ENCODE measurements at regions of chr17 and their contacts with region 1.

Region 1: DNA sequence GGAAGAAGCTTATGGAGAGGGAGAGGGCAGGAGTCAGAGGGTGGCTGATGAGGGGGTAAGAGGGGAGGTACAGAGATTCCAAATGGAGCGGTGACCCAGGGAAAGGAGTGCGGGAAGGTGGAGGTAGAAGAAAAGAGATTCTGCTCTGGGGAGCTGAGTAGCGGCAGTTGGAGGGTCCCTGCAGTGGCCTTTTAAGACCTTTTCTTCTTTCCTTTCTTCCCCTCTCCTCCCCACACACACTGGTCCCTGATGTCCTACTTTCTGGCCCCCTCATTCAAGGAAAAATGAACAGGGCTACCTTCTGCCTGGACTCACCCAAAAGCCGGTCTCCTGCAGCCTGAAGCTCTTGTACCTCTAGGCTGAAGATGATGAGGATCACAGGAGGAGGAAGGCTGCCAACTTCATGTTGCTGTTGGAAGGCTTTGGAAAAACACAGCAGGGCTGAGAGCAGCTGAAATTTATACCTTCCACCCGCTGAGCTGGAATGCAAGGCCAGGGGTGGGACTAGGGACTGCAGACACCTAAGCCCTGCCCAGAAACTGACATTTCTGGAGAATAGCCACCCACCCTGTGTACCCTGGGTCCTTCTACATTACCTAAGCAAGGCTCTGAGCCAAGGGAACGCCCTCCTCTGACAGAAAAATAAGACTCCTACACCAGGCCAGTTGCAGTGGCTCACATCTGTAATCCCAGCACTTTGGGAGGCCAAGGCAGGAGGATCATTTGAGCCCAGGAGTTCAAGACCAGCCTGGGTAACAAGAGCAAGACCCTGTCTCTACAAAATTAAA is 9.4 kb upstream of the HEATR6 start:
- DNase-seq: peak; percentile 95
- H3K4me3 Mint-ChIP-seq: peak overlapping the region; percentile 71
- H3K27ac Mint-ChIP-seq: peak overlapping the region; percentile 64
- H3K4me1 Mint-ChIP-seq: peaks cover 29% of the 10 kb centered on the region
- H3K27me3 Mint-ChIP-seq: no peaks in the 10 kb centered on the region
- CTCF ChIP-seq: no peak

Region 2: DNA sequence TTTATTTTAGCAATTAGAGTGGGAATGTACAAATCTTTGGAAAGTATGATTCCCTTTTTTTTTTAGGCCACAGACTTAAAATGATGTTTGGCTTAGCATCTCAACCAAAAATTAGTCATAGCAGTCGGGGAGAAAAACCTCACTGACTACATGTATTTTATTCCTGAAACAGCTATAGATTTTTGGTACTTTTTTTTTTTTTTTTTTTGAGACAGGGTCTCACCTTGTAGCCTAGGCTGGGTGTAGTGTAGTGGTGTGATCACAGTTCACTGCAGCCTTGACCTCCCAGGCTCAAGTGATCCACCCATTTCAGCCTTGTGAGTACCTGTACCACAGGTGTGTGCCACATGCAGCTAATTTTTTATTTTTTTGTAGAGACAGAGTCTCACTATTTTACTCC is 146.9 kb before region 1 on chr17:
- CTCF ChIA-PET with region 1: no interaction called
- POLR2A ChIA-PET with region 1: no interaction called
- intact Hi-C with region 1: no loop called
- DNase-seq: no peak
- H3K4me3 Mint-ChIP-seq: no peak overlapping the region
- H3K27ac Mint-ChIP-seq: no peak overlapping the region
- H3K4me1 Mint-ChIP-seq: no peaks in the 10 kb centered on the region
- H3K27me3 Mint-ChIP-seq: no peaks in the 10 kb centered on the region
- CTCF ChIP-seq: no peak

Region 3: GRCh38 chr17:60077672-60078519 is 10.2 kb before region 1 on chr17:
- CTCF ChIA-PET with region 1: interaction called, 4 read pairs
- POLR2A ChIA-PET with region 1: interaction called, 20 read pairs
- intact Hi-C with region 1: no loop called
- DNase-seq: no peak
- H3K4me3 Mint-ChIP-seq: peak overlapping the region; percentile 85
- H3K27ac Mint-ChIP-seq: peak overlapping the region; percentile 69
- H3K4me1 Mint-ChIP-seq: peaks cover 30% of the 10 kb centered on the region
- H3K27me3 Mint-ChIP-seq: no peaks in the 10 kb centered on the region
- CTCF ChIP-seq: no peak

Region 4: DNA sequence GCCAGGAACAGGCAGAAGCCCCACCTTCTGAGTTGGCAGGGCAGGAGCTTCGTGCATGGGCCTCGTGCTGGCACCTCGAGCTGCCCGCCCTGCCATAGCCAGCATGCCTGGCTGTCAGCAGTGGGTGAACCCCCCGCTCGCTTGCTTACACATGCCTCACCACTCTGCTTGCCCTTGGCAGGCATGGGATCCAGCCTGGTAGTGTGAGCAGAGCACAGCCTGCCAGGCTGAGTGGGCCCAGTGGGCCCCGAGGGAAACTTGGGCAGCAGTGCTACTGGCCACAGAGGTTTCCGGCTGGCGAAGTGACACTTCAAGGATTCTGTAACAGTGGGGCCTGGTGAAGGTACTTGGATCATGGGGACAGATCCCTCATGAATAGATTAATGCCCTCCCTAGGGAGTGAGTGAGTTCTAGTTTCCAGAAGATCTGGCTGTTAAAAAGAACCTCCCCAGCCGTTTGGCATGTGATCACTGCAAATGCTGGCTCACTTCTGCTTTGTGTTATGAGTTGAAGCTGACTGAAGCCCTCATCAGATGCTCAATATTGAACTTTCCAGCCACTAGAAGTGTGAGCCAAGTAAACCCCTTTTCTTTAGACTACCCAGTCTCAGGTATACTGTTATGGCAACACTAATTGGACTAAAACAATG is 704.3 kb after region 1 on chr17:
- CTCF ChIA-PET with region 1: no interaction called
- POLR2A ChIA-PET with region 1: no interaction called
- intact Hi-C with region 1: no loop called
- DNase-seq: no peak
- H3K4me3 Mint-ChIP-seq: no peak overlapping the region
- H3K27ac Mint-ChIP-seq: no peak overlapping the region
- H3K4me1 Mint-ChIP-seq: no peaks in the 10 kb centered on the region
- H3K27me3 Mint-ChIP-seq: no peaks in the 10 kb centered on the region
- CTCF ChIP-seq: no peak